Ascending aorta (tissue), 2 donors: ENCODE measurements at regions of chr3 and their contacts with region 1.

Region 1: DNA sequence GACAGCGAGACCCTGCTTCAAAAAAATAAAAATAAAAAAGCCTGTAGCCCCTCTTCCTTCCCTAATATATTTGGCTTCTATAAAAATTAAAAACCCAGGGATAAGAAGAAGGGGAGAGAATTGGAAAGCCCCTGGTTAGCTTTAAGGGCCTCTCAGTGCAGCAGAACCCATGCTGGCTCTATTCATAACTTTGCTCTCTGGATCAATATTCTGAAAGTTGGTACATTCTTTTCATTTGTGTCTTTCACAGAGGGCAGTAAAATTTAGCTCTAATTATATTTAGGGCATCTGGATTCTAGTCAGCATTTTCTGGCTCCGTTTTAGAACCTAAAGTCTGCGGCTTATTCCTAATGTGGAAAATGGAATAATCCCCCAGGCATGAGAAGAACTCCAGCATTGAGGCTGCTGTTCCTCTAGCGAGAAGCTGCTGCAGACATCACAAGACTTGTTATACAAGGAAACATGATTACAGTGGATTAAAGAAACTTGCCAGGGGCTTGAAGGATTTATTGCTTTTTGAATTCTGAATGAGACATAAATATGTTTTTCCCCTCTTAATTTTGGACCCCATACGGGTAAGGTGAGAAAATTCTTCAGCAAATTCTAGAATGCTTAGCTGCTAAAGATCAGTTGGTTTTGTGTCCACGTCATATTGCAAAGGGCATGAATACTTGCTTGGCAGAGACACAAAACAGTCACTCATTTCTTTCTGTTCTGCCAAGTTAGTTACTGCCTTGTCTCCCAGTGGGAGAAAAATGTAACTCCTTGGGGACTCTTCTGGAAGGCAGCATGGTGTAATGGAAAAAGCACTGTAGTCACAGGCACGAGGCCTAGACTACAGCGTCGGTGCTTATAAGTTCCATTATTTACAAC is 177.7 kb downstream of the VGLL4 start:
- DNase-seq: peak in 1 of 2 donors; percentile 90
- H3K4me3 ChIP-seq: peak overlapping the region in 1 of 2 donors; percentile 32
- H3K27ac ChIP-seq: peak overlapping the region; percentile 91 to 92
- H3K4me1 ChIP-seq: peaks cover 4 to 33% of the 10 kb centered on the region in 2 donors
- H3K27me3 ChIP-seq: no peaks in the 10 kb centered on the region
- CTCF ChIP-seq: no peak

Region 2: GRCh38 chr3:10845839-10846656 is 619.9 kb before region 1 on chr3:
- intact Hi-C with region 1: no loop called
- DNase-seq: no peak
- H3K4me3 ChIP-seq: no peak overlapping the region
- H3K27ac ChIP-seq: no peak overlapping the region
- H3K4me1 ChIP-seq: no peaks in the 10 kb centered on the region
- H3K27me3 ChIP-seq: no peaks in the 10 kb centered on the region
- CTCF ChIP-seq: no peak

Region 3: DNA sequence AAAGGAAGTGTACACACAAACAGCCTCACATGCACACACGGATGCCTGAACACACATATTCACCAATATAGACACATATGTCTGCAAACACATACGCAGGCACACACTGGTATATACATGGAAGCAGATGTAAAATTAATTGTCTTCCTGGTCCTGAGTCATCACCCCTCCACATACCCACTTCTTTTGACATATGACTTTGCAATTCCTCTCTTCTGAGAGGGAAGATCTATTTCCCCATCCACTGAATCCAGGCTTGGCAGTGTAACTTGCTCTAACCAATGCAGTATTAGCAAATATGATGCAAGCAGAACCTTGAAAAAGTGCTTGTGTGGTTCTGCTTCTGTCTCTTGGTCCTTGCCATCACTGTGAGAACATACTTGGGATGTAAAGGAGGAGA is 388.5 kb before region 1 on chr3:
- intact Hi-C with region 1: no loop called
- DNase-seq: no peak
- H3K4me3 ChIP-seq: no peak overlapping the region
- H3K27ac ChIP-seq: no peak overlapping the region
- H3K4me1 ChIP-seq: no peaks in the 10 kb centered on the region
- H3K27me3 ChIP-seq: no peaks in the 10 kb centered on the region
- CTCF ChIP-seq: no peak

Region 4: GRCh38 chr3:11385891-11386290 is 80.1 kb before region 1 on chr3:
- intact Hi-C with region 1: loop called (anchors 5 kb)
- DNase-seq: no peak
- H3K4me3 ChIP-seq: no peak overlapping the region
- H3K27ac ChIP-seq: peak overlapping the region; percentile 13 to 24
- H3K4me1 ChIP-seq: peaks cover 0 to 32% of the 10 kb centered on the region in 2 donors
- H3K27me3 ChIP-seq: no peaks in the 10 kb centered on the region
- CTCF ChIP-seq: no peak

Region 5: GRCh38 chr3:11548721-11549131 is 82.7 kb after region 1 on chr3:
- intact Hi-C with region 1: no loop called
- DNase-seq: peak in 1 of 2 donors; percentile 62
- H3K4me3 ChIP-seq: no peak overlapping the region
- H3K27ac ChIP-seq: peak overlapping the region in 1 of 2 donors; percentile 6
- H3K4me1 ChIP-seq: peaks cover 4 to 20% of the 10 kb centered on the region in 2 donors
- H3K27me3 ChIP-seq: no peaks in the 10 kb centered on the region
- CTCF ChIP-seq: no peak